Thyroid gland (tissue), 4 donors: ENCODE measurements at regions of chr21 and their contacts with region 1.

Region 1: GRCh38 chr21:41283211-41283818 is 33.3 kb upstream of the FAM3B start:
- DNase-seq: peak; percentile 42 to 48
- H3K4me3 ChIP-seq: no peak overlapping the region
- H3K27ac ChIP-seq: no peak overlapping the region
- H3K4me1 ChIP-seq: peaks cover 0 to 4% of the 10 kb centered on the region in 2 donors
- H3K27me3 ChIP-seq: no peaks in the 10 kb centered on the region
- CTCF ChIP-seq: peak; percentile 21 to 88 (median 78)
- POLR2A ChIP-seq: no peak

Region 2: DNA sequence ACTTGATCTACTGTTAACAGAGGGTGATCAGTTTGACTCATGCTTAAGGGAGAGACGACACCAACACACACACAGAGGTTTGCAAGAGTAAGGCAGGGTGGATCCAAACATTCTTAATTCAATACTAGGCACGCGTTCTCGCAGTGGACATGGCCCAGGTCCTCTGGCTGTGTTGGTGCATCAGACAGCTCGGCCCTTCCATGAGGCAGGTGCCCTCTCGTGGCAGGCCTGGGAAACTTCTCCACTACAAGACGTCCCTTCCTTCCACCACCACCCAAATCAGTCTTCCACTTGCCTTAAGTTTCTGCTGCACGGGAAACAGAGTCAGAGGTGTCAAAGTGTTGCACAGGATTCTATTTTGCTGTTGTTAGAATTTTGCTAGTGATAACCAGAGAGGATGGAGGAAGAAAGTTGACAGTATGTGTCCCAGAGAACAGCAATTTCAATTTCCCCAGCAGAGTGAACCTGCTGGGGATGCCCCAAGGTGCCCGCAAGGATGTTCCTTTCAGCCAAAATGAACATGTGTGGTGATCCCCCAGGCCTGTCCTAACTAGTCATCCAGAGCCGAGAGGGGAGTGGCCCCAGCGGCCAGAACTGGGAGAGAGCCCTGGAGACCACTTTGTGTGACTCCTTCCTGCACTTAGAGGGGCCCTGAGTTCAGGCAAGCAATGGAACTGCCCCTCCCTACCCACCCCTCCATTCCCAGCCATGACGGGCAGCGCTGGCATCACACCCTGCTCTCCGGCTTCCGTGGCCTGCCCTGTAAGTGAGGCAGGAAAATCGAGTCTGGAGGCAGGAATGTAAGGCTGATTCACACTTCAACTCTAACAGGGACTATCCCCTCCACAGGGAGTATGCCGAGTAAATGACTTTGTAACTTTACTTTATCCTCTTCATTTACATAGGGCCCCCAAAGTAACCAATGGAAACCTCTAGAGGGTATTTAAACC is 177.5 kb after region 1 on chr21:
- intact Hi-C with region 1: loop called (anchors 5 kb)
- DNase-seq: peak; percentile 81 to 87
- H3K4me3 ChIP-seq: no peak overlapping the region
- H3K27ac ChIP-seq: peak overlapping the region in 2 of 3 donors; percentile 42 to 70
- H3K4me1 ChIP-seq: peaks cover 18 to 25% of the 10 kb centered on the region in 2 donors
- H3K27me3 ChIP-seq: no peaks in the 10 kb centered on the region
- CTCF ChIP-seq: peak; percentile 40 to 85 (median 82)
- POLR2A ChIP-seq: no peak

Region 3: GRCh38 chr21:41828481-41829360 is 545.4 kb after region 1 on chr21:
- intact Hi-C with region 1: loop called (anchors 10 kb)
- DNase-seq: no peak
- H3K4me3 ChIP-seq: no peak overlapping the region
- H3K27ac ChIP-seq: no peak overlapping the region
- H3K4me1 ChIP-seq: no peaks in the 10 kb centered on the region
- H3K27me3 ChIP-seq: no peaks in the 10 kb centered on the region
- CTCF ChIP-seq: no peak
- POLR2A ChIP-seq: no peak